Right ventricle myocardium superior (tissue), 1 donor: ENCODE measurements at regions of chr20 and their contacts with region 1.

Region 1: DNA sequence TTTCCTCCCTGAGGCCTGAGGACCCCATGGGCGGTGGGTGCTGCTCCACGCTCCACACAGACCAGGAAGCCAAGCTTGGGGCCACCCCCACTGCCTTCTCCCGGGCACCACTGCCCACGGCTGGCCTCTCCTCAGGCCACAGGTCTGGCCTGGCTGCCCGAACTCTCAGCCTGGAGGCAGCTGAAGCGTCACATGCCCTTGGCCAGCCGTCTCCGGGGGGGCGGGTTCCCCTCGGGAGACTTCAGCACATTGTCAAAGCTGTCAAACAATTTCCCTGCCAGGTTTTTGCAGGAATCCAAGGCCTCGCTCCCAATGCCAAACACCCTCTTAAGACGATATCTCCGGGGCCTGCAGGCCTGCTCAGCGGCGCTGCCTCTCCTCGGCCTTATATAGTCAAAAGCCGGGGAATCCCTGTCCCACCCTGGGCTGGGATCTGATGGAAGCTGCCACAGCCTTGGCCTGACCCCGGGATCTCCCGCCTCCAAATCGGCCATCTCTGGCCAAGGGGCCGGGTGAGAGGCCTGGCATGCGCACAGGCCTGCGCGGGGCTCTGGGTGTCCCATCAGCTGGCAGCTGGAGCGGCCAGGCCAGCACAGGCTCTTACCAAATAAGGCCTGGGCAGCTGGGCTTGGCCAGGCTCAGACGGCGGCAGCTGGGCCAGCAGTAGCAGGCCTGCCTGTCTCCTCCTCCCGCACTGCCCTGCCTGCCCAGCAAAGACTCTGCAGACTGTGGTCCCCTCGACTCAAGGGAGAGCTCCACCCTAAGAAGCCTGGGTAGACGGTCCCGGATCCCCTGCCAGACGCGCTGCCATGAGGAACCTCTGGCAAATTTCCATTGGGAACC is 49.7 kb downstream of the RBM38 start:
- DNase-seq: peak; percentile 94
- ATAC-seq: peak; percentile 87

Region 2: DNA sequence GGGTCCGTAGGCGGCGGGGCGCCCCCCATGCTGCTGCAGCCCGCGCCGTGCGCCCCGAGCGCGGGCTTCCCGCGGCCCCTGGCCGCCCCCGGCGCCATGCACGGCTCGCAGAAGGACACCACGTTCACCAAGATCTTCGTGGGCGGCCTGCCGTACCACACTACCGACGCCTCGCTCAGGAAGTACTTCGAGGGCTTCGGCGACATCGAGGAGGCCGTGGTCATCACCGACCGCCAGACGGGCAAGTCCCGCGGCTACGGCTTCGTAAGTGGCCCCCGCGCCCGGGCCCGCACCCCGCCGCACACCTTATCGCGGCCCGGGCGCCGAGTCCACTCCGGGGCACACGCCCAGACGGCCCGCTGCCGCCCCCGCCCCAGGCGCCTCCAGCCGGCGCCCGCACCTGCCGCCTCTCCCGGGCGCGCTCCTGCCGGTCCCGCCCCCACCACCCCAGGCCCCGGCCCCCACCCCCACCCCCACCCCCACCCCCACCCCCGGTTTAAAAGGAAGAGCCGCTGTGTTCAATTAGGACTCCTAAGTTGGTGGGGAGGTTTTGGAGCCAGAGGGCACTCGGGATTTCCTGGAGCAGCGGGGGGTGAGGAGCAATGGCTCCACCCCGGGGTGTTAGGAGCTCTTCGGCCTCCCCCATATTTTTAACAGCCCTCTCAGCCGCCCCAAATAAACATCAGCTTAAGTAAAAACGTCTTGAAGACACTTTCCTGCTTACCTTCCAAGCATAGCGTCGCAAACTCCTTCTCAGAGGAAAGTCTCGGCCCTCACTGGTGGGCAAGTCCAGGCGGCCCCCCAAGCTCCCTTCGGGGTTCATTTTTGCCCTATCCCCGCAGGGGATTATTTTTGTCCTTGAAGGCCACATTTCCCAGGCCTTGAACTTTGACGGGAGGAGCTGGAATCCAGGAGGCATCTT is 49.1 kb before region 1 on chr20:
- intact Hi-C with region 1: loop called (anchors 2 kb)
- DNase-seq: peak; percentile 66
- ATAC-seq: no peak

Region 3: GRCh38 chr20:57493091-57493615 is 52.3 kb after region 1 on chr20:
- intact Hi-C with region 1: no loop called
- DNase-seq: no peak
- ATAC-seq: no peak